Aorta (tissue), 5 donors: ENCODE measurements at regions of chr1 and their contacts with region 1.

Region 1: GRCh38 chr1:179002552-179003345 is 22.9 kb upstream of the FAM20B start:
- DNase-seq: peak; percentile 75 to 91
- ATAC-seq: peak; percentile 87
- H3K4me3 ChIP-seq: no peak overlapping the region
- H3K27ac ChIP-seq: no peak overlapping the region
- H3K4me1 ChIP-seq: no peaks in the 10 kb centered on the region
- H3K27me3 ChIP-seq: no peaks in the 10 kb centered on the region

Region 2: GRCh38 chr1:178542560-178543356 is 460.0 kb before region 1 on chr1:
- intact Hi-C with region 1: loop called (anchors 2 to 10 kb)
- DNase-seq: peak; percentile 90 to 97
- ATAC-seq: peak; percentile 97
- H3K4me3 ChIP-seq: peak overlapping the region; percentile 76 to 96
- H3K27ac ChIP-seq: peak overlapping the region in 1 of 2 donors; percentile 47
- H3K4me1 ChIP-seq: no peaks in the 10 kb centered on the region
- H3K27me3 ChIP-seq: no peaks in the 10 kb centered on the region

Region 3: GRCh38 chr1:178774263-178774662 is 228.5 kb before region 1 on chr1:
- intact Hi-C with region 1: loop called (anchors 2 to 5 kb)
- DNase-seq: no peak
- ATAC-seq: no peak
- H3K4me3 ChIP-seq: no peak overlapping the region
- H3K27ac ChIP-seq: no peak overlapping the region
- H3K4me1 ChIP-seq: no peaks in the 10 kb centered on the region
- H3K27me3 ChIP-seq: no peaks in the 10 kb centered on the region

Region 4: GRCh38 chr1:178806665-178807300 is 196.0 kb before region 1 on chr1:
- intact Hi-C with region 1: loop called in 1 of 2 experiments (anchors 1 kb)
- DNase-seq: no peak
- ATAC-seq: no peak
- H3K4me3 ChIP-seq: no peak overlapping the region
- H3K27ac ChIP-seq: no peak overlapping the region
- H3K4me1 ChIP-seq: no peaks in the 10 kb centered on the region
- H3K27me3 ChIP-seq: no peaks in the 10 kb centered on the region

Region 5: GRCh38 chr1:178818416-178818815 is 184.3 kb before region 1 on chr1:
- intact Hi-C with region 1: loop called in 1 of 2 experiments (anchors 2 kb)
- DNase-seq: no peak
- ATAC-seq: no peak
- H3K4me3 ChIP-seq: no peak overlapping the region
- H3K27ac ChIP-seq: no peak overlapping the region
- H3K4me1 ChIP-seq: no peaks in the 10 kb centered on the region
- H3K27me3 ChIP-seq: no peaks in the 10 kb centered on the region

Region 6: DNA sequence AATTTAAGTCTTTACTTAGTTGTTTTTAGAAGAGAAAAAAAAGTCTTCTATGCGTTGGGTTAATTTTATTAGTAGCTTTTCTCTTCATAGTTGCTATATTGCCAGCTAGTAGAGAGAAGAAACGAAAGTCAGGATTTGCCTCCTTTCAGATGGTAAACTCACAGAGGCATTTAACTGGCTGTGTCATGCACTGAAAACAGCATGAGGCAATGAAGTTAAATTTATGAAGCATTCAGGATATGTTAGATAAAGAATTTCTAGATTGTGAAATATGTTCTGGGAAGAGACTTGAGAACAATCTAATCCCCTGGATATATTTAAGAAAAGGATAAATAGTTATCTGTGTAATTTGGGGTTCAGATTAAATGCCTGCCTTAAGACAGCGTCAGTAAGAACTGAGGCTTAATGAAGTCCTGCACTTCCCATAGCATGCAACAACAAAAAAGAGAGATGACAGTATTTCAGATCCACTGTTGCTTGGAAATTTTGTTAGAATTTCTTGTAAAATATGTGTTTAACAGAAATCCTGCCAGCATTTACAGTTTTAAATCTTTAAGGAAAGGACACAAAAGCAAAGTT is 133.5 kb before region 1 on chr1:
- intact Hi-C with region 1: loop called (anchors 5 kb)
- DNase-seq: no peak
- ATAC-seq: peak; percentile 68
- H3K4me3 ChIP-seq: peak overlapping the region; percentile 47 to 93
- H3K27ac ChIP-seq: peak overlapping the region in 1 of 2 donors; percentile 57
- H3K4me1 ChIP-seq: peaks cover 3% of the 10 kb centered on the region in 2 donors
- H3K27me3 ChIP-seq: no peaks in the 10 kb centered on the region

Region 7: GRCh38 chr1:178942285-178943198 is 60.2 kb before region 1 on chr1:
- intact Hi-C with region 1: loop called in 1 of 2 experiments (anchors 5 kb)
- DNase-seq: peak in 1 of 2 donors; percentile 54
- ATAC-seq: no peak
- H3K4me3 ChIP-seq: no peak overlapping the region
- H3K27ac ChIP-seq: peak overlapping the region in 1 of 2 donors; percentile 10
- H3K4me1 ChIP-seq: peaks cover 0 to 4% of the 10 kb centered on the region in 2 donors
- H3K27me3 ChIP-seq: no peaks in the 10 kb centered on the region

Region 8: GRCh38 chr1:179066471-179066870 is 63.7 kb after region 1 on chr1:
- intact Hi-C with region 1: no loop called
- DNase-seq: no peak
- ATAC-seq: no peak
- H3K4me3 ChIP-seq: no peak overlapping the region
- H3K27ac ChIP-seq: no peak overlapping the region
- H3K4me1 ChIP-seq: no peaks in the 10 kb centered on the region
- H3K27me3 ChIP-seq: no peaks in the 10 kb centered on the region